Heart right ventricle (tissue), 16 donors: ENCODE measurements at regions of chr4 and their contacts with region 1.

Region 1: GRCh38 chr4:26404743-26405206 is 84.0 kb downstream of the RBPJ start:
- DNase-seq: no peak
- ATAC-seq: no peak
- H3K4me3 ChIP-seq: no peak overlapping the region
- H3K27ac ChIP-seq: no peak overlapping the region
- H3K4me1 ChIP-seq: peaks cover 0 to 8% (median 4%) of the 10 kb centered on the region in 9 donors
- H3K27me3 ChIP-seq: no peaks in the 10 kb centered on the region
- CTCF ChIP-seq: peak in 1 of 9 donors; percentile 12

Region 2: GRCh38 chr4:25439918-25440477 is 964.8 kb before region 1 on chr4:
- intact Hi-C with region 1: loop called in 1 of 10 experiments (anchors 5 kb)
- DNase-seq: peak in 1 of 2 donors; percentile 61
- ATAC-seq: peak in 7 of 8 donors; percentile 27 to 74 (median 61)
- H3K4me3 ChIP-seq: no peak overlapping the region
- H3K27ac ChIP-seq: peak overlapping the region in 1 of 10 donors; percentile 39
- H3K4me1 ChIP-seq: peaks cover 0 to 16% (median 10%) of the 10 kb centered on the region in 9 donors
- H3K27me3 ChIP-seq: no peaks in the 10 kb centered on the region
- CTCF ChIP-seq: peak; percentile 71 to 94 (median 84)

Region 3: DNA sequence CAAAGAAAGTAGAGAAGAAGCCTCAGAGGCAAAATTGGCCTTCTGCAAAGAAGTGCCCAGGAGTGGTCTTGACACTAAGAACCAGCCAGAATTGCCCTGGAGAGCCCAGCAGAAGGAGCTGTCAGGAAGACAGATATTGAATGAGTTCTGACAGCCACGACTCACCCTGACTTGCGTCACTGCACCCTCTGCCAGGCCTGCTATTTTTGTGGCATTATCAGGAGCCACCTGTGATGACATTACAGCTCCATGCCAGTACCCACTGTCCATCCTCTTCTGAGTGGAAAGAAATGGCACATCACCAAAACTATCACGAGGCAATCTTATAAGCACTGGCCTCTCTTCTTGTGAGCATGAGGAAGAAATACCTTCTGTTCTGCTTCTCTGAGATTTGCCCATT is 423.0 kb before region 1 on chr4:
- intact Hi-C with region 1: loop called in 1 of 10 experiments (anchors 10 kb)
- DNase-seq: peak; percentile 39 to 41
- ATAC-seq: peak in 6 of 8 donors; percentile 73 to 96 (median 94)
- H3K4me3 ChIP-seq: no peak overlapping the region
- H3K27ac ChIP-seq: peak overlapping the region in 1 of 10 donors; percentile 44
- H3K4me1 ChIP-seq: peaks cover 0 to 7% (median 0%) of the 10 kb centered on the region in 9 donors
- H3K27me3 ChIP-seq: no peaks in the 10 kb centered on the region
- CTCF ChIP-seq: no peak

Region 4: DNA sequence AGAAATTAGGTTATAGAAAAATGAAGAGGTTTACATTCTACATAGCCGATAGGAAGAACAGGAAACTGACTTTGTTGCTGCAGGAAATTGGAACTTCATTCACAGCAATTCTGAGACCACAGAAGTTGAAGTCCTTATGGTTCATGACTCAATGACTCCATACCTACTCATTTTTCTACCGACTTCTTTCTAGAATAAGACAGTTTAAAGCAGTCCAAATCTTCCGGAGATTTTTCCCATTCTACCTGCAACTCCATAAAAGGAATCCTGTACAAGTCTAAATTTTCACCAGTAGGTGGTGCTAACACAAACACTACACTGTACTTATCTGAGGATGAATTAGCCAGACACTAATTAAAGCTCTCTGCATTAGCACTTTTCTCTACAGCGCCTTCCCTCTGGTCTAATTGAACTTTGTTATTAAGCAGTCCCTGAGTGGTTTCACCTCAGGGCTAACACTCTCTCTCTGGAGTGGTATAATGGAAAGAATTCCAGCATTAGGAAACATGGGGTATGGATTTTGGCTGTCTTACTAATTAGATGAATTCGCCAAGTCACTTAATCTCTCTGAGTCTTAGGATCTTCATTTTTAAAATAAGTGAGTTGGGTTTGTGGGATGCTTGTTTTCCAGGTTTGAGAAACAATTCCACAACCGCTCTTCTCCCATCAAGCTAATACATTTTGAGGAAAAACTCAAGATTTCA is 322.8 kb before region 1 on chr4:
- intact Hi-C with region 1: loop called in 4 of 10 experiments (anchors 5 to 10 kb)
- DNase-seq: no peak
- ATAC-seq: peak in 7 of 8 donors; percentile 44 to 66 (median 53)
- H3K4me3 ChIP-seq: no peak overlapping the region
- H3K27ac ChIP-seq: peak overlapping the region in 1 of 10 donors; percentile 34
- H3K4me1 ChIP-seq: peaks cover 0 to 52% (median 0%) of the 10 kb centered on the region in 9 donors
- H3K27me3 ChIP-seq: peaks cover 0 to 11% (median 2%) of the 10 kb centered on the region in 7 donors
- CTCF ChIP-seq: peak; percentile 60 to 82 (median 72)

Region 5: GRCh38 chr4:26330186-26330787 is 74.5 kb before region 1 on chr4:
- intact Hi-C with region 1: loop called in 4 of 10 experiments (anchors 5 to 10 kb)
- DNase-seq: no peak
- ATAC-seq: peak in 5 of 8 donors; percentile 66 to 78 (median 76)
- H3K4me3 ChIP-seq: no peak overlapping the region
- H3K27ac ChIP-seq: peak overlapping the region in 1 of 10 donors; percentile 5
- H3K4me1 ChIP-seq: peaks cover 0 to 82% (median 26%) of the 10 kb centered on the region in 9 donors
- H3K27me3 ChIP-seq: no peaks in the 10 kb centered on the region
- CTCF ChIP-seq: peak; percentile 48 to 76 (median 69)